ENCODE measurements at regions of chr11 and their contacts with region 1.

Region 1: DNA sequence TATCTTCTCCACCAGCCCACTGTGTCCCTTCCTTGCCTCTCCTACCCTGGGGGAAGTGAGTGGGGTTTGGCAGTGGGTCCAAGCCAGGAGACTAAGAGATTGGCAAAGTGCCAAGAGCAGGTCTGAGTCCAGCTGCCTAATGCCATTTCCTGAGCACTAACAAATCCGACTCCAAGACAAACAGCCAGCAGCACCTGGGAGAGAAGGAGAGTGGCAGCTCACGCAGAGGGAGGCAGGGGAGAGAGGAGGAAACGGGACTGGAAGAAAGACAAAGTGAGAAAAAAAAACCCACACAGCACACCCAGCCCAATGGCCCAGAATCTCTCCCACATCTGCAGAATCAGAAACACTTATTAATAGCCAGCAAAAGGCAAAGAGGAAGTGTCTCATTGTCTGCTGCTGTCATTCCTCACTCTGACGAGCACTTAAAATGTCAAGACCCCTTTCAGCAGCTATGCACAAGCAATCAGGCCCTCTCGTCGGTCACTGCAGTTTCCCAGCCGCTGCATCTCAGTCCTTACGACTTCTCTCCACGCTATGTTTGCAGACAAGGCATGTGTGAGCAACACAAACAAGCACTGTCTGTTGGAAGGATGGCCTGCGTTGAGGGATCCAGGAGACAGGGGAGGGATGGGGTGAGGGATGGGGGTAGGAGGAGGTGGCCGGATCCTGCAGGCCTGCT is 558.4 kb upstream of the CADM1 start:
- DNase-seq: peak in 1 of 2 donors; percentile 18
- H3K4me3 ChIP-seq: no peak overlapping the region
- H3K27ac ChIP-seq: no peak overlapping the region
- H3K4me1 ChIP-seq: no peaks in the 10 kb centered on the region
- H3K27me3 ChIP-seq: no peaks in the 10 kb centered on the region
- CTCF ChIP-seq: no peak
- POLR2A ChIP-seq: no peak

Region 2: GRCh38 chr11:114785820-114786219 is 1276.8 kb before region 1 on chr11:
- intact Hi-C with region 1: loop called (anchors 10 kb)
- DNase-seq: no peak
- H3K4me3 ChIP-seq: no peak overlapping the region
- H3K27ac ChIP-seq: no peak overlapping the region
- H3K4me1 ChIP-seq: no peaks in the 10 kb centered on the region
- H3K27me3 ChIP-seq: no peaks in the 10 kb centered on the region
- CTCF ChIP-seq: no peak
- POLR2A ChIP-seq: no peak

Region 3: GRCh38 chr11:115645625-115646317 is 416.9 kb before region 1 on chr11:
- intact Hi-C with region 1: loop called (anchors 5 kb)
- DNase-seq: no peak
- H3K4me3 ChIP-seq: no peak overlapping the region
- H3K27ac ChIP-seq: no peak overlapping the region
- H3K4me1 ChIP-seq: no peaks in the 10 kb centered on the region
- H3K27me3 ChIP-seq: peaks cover 0 to 8% of the 10 kb centered on the region in 2 donors
- CTCF ChIP-seq: no peak
- POLR2A ChIP-seq: no peak

Region 4: DNA sequence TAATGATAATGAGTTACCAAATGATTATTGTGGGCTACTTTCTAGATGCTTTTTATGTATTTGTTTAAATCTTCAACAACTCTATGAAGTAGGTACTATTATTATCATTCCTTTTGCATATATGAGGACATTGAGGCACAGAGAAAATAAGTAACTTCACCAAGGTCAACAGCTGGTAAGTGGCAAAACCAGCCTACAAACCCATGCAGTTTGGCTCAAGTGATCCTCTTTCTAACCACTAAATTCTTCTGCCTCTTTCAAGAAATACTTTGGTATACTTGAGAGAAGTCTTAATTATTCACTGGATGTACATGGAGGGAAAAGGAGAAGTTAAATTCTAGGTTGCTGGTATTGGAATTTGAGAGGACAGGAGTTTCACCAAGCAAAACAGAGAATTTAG is 63.2 kb before region 1 on chr11:
- intact Hi-C with region 1: no loop called
- DNase-seq: no peak
- H3K4me3 ChIP-seq: no peak overlapping the region
- H3K27ac ChIP-seq: no peak overlapping the region
- H3K4me1 ChIP-seq: no peaks in the 10 kb centered on the region
- H3K27me3 ChIP-seq: peaks cover 0 to 4% of the 10 kb centered on the region in 2 donors
- CTCF ChIP-seq: no peak
- POLR2A ChIP-seq: no peak

Region 5: GRCh38 chr11:116030697-116031331 is 31.8 kb before region 1 on chr11:
- intact Hi-C with region 1: no loop called
- DNase-seq: no peak
- H3K4me3 ChIP-seq: no peak overlapping the region
- H3K27ac ChIP-seq: no peak overlapping the region
- H3K4me1 ChIP-seq: no peaks in the 10 kb centered on the region
- H3K27me3 ChIP-seq: no peaks in the 10 kb centered on the region
- CTCF ChIP-seq: no peak
- POLR2A ChIP-seq: no peak

Measured in breast epithelium (tissue), 4 donors.